ENCODE measurements at regions of chr9 and their contacts with region 1.

Region 1: DNA sequence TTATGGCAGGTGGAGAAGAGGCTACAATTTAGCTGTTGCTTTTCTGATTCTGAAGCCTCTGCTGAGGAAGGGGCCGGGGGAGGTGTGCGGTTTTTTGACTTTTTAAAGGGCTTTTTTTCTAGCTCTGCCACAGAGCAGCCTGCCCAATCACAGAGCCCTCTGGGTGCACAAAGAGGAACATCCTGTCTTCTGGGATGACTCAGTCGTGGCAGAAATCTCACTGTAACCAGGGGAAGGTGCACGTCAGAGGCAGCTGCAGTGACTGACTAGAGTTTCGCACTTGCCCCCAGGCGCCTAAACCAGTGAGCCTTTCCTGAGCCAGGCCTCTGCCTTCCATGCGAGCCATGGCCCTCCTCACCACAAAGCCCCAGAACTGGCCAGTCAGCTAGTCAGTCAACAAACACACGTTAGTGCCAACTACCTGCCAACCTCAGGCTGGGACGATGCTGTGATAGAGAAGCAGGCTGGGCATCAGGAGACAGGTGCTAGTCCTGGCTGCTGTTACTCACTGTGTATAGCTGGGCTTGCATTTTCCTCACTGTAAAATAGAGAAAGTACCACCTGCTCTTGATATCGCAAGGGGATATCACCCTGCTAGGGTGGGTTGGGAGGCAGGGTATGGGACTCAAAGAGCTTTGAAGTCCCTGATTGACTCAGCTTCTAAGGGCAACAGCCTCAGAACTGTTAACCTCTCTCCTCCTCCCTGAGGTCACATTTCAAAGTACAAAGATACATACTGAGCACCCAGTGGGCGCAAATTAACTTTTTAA is 2.2 kb downstream of the AKNA start:
- DNase-seq: peak; percentile 68 to 96 (median 93)
- ATAC-seq: peak; percentile 88
- H3K4me3 ChIP-seq: peak overlapping the region; percentile 63
- H3K4me3 Mint-ChIP-seq: peak overlapping the region; percentile 89 to 100 (median 96)
- H3K27ac ChIP-seq: peak overlapping the region; percentile 87
- H3K27ac Mint-ChIP-seq: peak overlapping the region; percentile 88 to 100 (median 96)
- H3K4me1 ChIP-seq: peaks cover 72 to 75% of the 10 kb centered on the region in 2 donors
- H3K4me1 Mint-ChIP-seq: peaks cover 61 to 77% (median 70%) of the 10 kb centered on the region in 7 donors
- H3K27me3 ChIP-seq: no peaks in the 10 kb centered on the region
- H3K27me3 Mint-ChIP-seq: no peaks in the 10 kb centered on the region

Region 2: GRCh38 chr9:114155263-114155972 is 230.2 kb before region 1 on chr9 and contains the start of gene COL27A1:
- CTCF ChIA-PET with region 1: interaction called, 3 read pairs
- POLR2A ChIA-PET with region 1: no interaction called
- intact Hi-C with region 1: loop called in 1 of 2 experiments (anchors 10 kb)
- DNase-seq: peak; percentile 38 to 90 (median 71)
- ATAC-seq: peak; percentile 91
- H3K4me3 ChIP-seq: peak within 1 kb of the TSS; percentile 40
- H3K4me3 Mint-ChIP-seq: peak within 1 kb of the TSS; percentile 88 to 98 (median 91)
- H3K27ac ChIP-seq: no peak within 1 kb of the TSS
- H3K27ac Mint-ChIP-seq: peak within 1 kb of the TSS in 7 of 9 donors; percentile 24 to 66 (median 62)
- H3K4me1 ChIP-seq: peaks cover 0 to 13% of the 10 kb centered on the region in 2 donors
- H3K4me1 Mint-ChIP-seq: peaks cover 15 to 32% (median 24%) of the 10 kb centered on the region in 7 donors
- H3K27me3 ChIP-seq: peaks cover 0 to 4% of the 10 kb centered on the region in 2 donors
- H3K27me3 Mint-ChIP-seq: peaks cover 31 to 54% (median 45%) of the 10 kb centered on the region in 5 donors
- total RNA-seq, gene COL27A1: 1.2 to 2.4 (median 1.9) TPM

Region 3: DNA sequence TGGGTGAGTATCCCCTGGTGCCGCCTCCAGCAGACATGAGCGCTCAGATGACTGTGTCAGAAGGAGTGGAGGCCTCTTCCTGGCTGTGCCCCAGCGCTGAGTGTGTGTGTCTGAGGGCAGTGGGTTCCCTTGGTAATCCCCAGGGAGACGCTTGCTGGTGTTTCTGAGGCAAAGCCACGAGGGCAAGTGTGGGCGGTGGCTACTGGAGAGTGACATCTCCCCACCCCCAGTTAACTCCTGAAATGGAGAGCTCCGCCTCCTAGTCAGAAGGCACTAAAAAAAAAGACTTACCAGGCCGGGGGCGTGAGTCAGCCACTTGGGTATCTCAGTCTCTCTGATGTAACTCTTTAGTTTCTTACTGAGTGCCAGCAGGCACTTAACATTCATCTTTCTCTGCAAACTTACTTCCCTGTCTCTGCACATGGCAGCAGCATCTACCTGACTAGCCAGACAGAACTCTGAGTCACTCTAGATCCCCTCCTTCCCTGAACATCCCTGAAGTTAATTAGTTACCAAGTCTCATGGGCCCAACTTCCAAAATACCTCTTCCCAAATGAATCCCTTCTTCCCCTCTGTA is 36.6 kb before region 1 on chr9:
- CTCF ChIA-PET with region 1: interaction called, 3 read pairs
- POLR2A ChIA-PET with region 1: interaction called, 978 read pairs
- intact Hi-C with region 1: loop called (anchors 1 kb)
- DNase-seq: peak in 3 of 9 donors; percentile 18 to 83 (median 62)
- ATAC-seq: peak; percentile 85
- H3K4me3 ChIP-seq: no peak overlapping the region
- H3K4me3 Mint-ChIP-seq: peak overlapping the region in 8 of 10 donors; percentile 29 to 65 (median 50)
- H3K27ac ChIP-seq: peak overlapping the region; percentile 70
- H3K27ac Mint-ChIP-seq: peak overlapping the region; percentile 79 to 98 (median 90)
- H3K4me1 ChIP-seq: peaks cover 22 to 24% of the 10 kb centered on the region in 2 donors
- H3K4me1 Mint-ChIP-seq: peaks cover 23 to 60% (median 43%) of the 10 kb centered on the region in 7 donors
- H3K27me3 ChIP-seq: no peaks in the 10 kb centered on the region
- H3K27me3 Mint-ChIP-seq: no peaks in the 10 kb centered on the region

Region 4: GRCh38 chr9:114372921-114373448 is 12.6 kb before region 1 on chr9:
- CTCF ChIA-PET with region 1: interaction called, 54 read pairs
- POLR2A ChIA-PET with region 1: interaction called, 978 read pairs
- intact Hi-C with region 1: loop called (anchors 1 kb)
- DNase-seq: peak; percentile 50 to 93 (median 90)
- ATAC-seq: peak; percentile 91
- H3K4me3 ChIP-seq: peak overlapping the region; percentile 51
- H3K4me3 Mint-ChIP-seq: peak overlapping the region; percentile 79 to 98 (median 86)
- H3K27ac ChIP-seq: peak overlapping the region; percentile 70
- H3K27ac Mint-ChIP-seq: peak overlapping the region; percentile 81 to 100 (median 93)
- H3K4me1 ChIP-seq: peaks cover 92% of the 10 kb centered on the region in 2 donors
- H3K4me1 Mint-ChIP-seq: peaks cover 58 to 97% (median 85%) of the 10 kb centered on the region in 7 donors
- H3K27me3 ChIP-seq: no peaks in the 10 kb centered on the region
- H3K27me3 Mint-ChIP-seq: no peaks in the 10 kb centered on the region

Region 5: DNA sequence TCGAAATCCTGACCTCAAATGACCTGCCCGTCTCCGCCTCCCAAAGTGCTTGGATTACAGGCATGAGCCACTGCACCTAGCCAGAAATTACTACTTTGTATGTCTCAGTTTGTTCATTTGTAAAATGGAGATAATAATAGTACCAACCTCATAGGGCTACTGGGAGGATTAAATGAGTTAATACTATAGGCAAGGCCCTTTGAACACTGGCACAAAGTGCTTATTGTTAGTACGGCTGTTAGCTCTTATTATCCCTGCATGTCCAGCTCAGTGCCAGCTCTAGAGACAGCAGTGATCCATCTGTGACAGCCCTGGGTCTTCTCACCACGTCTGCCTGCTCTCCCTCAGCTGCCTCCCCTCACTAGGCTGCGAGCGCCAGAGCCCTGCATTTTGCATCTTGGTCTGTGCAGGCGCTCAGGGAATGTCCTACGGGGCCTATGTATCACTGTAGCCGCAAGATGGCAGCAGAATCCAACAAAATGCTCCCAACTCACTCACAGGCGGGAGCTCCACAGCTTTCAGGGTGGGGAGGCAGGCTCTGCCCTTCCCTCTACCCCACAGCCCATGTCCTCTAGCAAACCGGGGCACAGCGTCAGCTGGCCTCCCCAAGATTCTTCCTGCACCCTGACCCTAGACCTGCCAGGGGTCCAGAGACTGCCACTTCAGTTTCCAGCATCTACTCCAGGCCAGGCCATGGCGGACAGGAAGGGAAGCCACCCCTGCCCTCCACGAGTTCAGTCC is 19.9 kb after region 1 on chr9:
- CTCF ChIA-PET with region 1: interaction called, 14 read pairs
- POLR2A ChIA-PET with region 1: interaction called, 17 read pairs
- intact Hi-C with region 1: no loop called
- DNase-seq: peak; percentile 56 to 84 (median 80)
- ATAC-seq: peak; percentile 97
- H3K4me3 ChIP-seq: no peak overlapping the region
- H3K4me3 Mint-ChIP-seq: no peak overlapping the region
- H3K27ac ChIP-seq: no peak overlapping the region
- H3K27ac Mint-ChIP-seq: peak overlapping the region in 6 of 9 donors; percentile 16 to 91 (median 60)
- H3K4me1 ChIP-seq: peaks cover 4 to 11% of the 10 kb centered on the region in 2 donors
- H3K4me1 Mint-ChIP-seq: peaks cover 6 to 10% (median 6%) of the 10 kb centered on the region in 7 donors
- H3K27me3 ChIP-seq: no peaks in the 10 kb centered on the region
- H3K27me3 Mint-ChIP-seq: no peaks in the 10 kb centered on the region

Region 6: DNA sequence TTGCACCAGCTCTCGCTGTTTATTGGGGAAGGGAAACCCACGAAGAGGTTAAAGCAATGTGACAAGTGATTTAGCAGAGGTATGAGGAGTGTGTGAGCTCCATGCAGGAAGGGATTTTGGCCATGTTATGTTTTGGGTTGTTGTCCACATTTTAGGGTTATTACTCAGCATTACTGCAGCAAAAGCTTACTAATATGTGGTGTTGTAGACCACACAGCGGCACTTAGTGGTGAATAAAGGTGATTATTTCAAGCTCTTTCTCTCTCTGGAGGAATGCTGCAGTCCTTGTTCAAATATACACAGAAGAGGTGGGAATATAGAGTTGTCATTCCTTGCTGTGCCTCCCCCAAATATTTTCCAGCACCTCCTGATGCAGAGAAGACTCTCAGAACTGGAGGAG is 31.9 kb after region 1 on chr9:
- CTCF ChIA-PET with region 1: no interaction called
- POLR2A ChIA-PET with region 1: no interaction called
- intact Hi-C with region 1: no loop called
- DNase-seq: no peak
- ATAC-seq: no peak
- H3K4me3 ChIP-seq: no peak overlapping the region
- H3K4me3 Mint-ChIP-seq: no peak overlapping the region
- H3K27ac ChIP-seq: no peak overlapping the region
- H3K27ac Mint-ChIP-seq: peak overlapping the region in 1 of 9 donors; percentile 8
- H3K4me1 ChIP-seq: no peaks in the 10 kb centered on the region
- H3K4me1 Mint-ChIP-seq: peaks cover 0 to 21% (median 0%) of the 10 kb centered on the region in 7 donors
- H3K27me3 ChIP-seq: no peaks in the 10 kb centered on the region
- H3K27me3 Mint-ChIP-seq: no peaks in the 10 kb centered on the region

Region 7: GRCh38 chr9:114430457-114430856 is 44.9 kb after region 1 on chr9:
- CTCF ChIA-PET with region 1: no interaction called
- POLR2A ChIA-PET with region 1: no interaction called
- intact Hi-C with region 1: no loop called
- DNase-seq: no peak
- ATAC-seq: no peak
- H3K4me3 ChIP-seq: no peak overlapping the region
- H3K4me3 Mint-ChIP-seq: no peak overlapping the region
- H3K27ac ChIP-seq: no peak overlapping the region
- H3K27ac Mint-ChIP-seq: no peak overlapping the region
- H3K4me1 ChIP-seq: no peaks in the 10 kb centered on the region
- H3K4me1 Mint-ChIP-seq: peaks cover 0 to 5% (median 4%) of the 10 kb centered on the region in 7 donors
- H3K27me3 ChIP-seq: no peaks in the 10 kb centered on the region
- H3K27me3 Mint-ChIP-seq: peaks cover 0 to 19% (median 0%) of the 10 kb centered on the region in 5 donors

Region 8: GRCh38 chr9:114611516-114612271 is 226.1 kb after region 1 on chr9:
- CTCF ChIA-PET with region 1: no interaction called
- POLR2A ChIA-PET with region 1: interaction called, 10 read pairs
- intact Hi-C with region 1: loop called (anchors 5 kb)
- DNase-seq: peak in 5 of 9 donors; percentile 24 to 44 (median 31)
- ATAC-seq: peak; percentile 82
- H3K4me3 ChIP-seq: peak overlapping the region; percentile 85
- H3K4me3 Mint-ChIP-seq: peak overlapping the region; percentile 90 to 99 (median 92)
- H3K27ac ChIP-seq: peak overlapping the region; percentile 92
- H3K27ac Mint-ChIP-seq: peak overlapping the region; percentile 77 to 98 (median 95)
- H3K4me1 ChIP-seq: peaks cover 14 to 31% of the 10 kb centered on the region in 2 donors
- H3K4me1 Mint-ChIP-seq: peaks cover 34 to 63% (median 55%) of the 10 kb centered on the region in 7 donors
- H3K27me3 ChIP-seq: no peaks in the 10 kb centered on the region
- H3K27me3 Mint-ChIP-seq: no peaks in the 10 kb centered on the region

Region 9: DNA sequence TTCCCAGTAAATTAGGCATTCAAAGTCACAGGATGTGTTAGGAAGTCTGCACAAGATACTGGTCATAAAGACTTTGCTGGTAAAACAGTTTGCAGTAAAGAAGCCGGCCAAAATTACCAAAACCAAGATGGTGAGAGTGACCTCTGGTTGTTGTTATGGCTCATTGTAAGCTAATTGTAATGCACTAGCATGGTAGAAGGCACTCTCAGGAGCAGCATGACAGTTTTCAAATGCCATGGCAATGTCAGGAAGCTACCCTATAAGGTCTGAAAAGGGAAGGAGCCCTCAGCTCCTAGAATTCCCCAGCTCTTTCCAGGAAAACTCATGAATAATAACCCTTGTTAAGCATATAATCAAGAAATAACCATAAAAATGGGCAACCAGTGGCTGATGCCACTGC is 796.7 kb after region 1 on chr9:
- CTCF ChIA-PET with region 1: no interaction called
- POLR2A ChIA-PET with region 1: no interaction called
- intact Hi-C with region 1: no loop called
- DNase-seq: no peak
- ATAC-seq: no peak
- H3K4me3 ChIP-seq: no peak overlapping the region
- H3K4me3 Mint-ChIP-seq: no peak overlapping the region
- H3K27ac ChIP-seq: no peak overlapping the region
- H3K27ac Mint-ChIP-seq: no peak overlapping the region
- H3K4me1 ChIP-seq: no peaks in the 10 kb centered on the region
- H3K4me1 Mint-ChIP-seq: no peaks in the 10 kb centered on the region
- H3K27me3 ChIP-seq: no peaks in the 10 kb centered on the region
- H3K27me3 Mint-ChIP-seq: peaks cover 3 to 16% (median 10%) of the 10 kb centered on the region in 5 donors

Measured in naive thymus-derived CD4-positive, alpha-beta T cell (primary cell).